ENCODE measurements at regions of chr22 and their contacts with region 1.

Region 1: GRCh38 chr22:39462443-39463221 is 5.8 kb downstream of the MGAT3 start:
- DNase-seq: peak; percentile 71 to 73
- H3K4me3 ChIP-seq: no peak overlapping the region
- H3K4me3 Mint-ChIP-seq: no peak overlapping the region
- H3K27ac Mint-ChIP-seq: no peak overlapping the region
- H3K4me1 ChIP-seq: peaks cover 21% of the 10 kb centered on the region
- H3K4me1 Mint-ChIP-seq: peaks cover 8% of the 10 kb centered on the region
- H3K27me3 ChIP-seq: no peaks in the 10 kb centered on the region
- H3K27me3 Mint-ChIP-seq: no peaks in the 10 kb centered on the region
- CTCF ChIP-seq: peak; percentile 29 to 65

Region 2: DNA sequence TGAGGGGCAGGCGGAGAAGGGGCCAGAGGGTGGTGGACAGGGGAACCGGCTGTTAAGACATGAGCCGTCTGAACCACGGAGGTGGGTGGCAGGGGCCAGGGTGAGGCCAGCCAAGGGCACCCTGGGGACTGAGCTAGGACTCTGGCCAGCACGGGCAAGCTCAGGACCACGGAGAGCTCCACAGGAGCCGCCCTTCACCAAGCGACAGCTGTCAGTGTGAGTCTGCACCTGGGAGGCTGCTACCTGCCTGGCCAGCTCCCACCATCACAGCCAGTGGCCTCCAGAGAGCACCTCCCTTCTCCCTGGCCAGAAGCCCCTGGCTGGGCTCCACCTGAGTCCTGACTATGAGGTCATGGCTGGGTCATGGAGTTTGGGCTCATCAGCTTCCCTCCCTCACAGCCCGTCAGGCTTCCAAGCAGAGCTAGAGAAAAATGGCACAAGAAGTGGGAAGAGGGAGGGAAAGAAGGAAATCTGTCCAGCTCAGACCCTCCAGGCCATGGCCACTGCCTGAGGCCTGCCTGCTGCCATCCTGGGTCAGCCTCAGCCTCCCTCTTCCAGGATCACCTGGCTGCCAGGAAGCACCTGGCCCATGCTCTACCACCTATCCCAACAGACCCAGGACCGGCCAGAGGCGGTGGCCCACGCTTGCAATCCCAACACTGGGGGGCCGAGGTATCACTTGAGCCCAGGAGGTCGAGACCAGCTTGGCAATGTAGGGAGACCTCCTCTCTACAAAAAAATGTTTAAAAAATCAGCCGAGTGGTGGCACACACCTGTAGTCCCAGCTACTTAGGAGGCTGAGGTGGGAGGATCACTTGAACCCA is 16.0 kb after region 1 on chr22:
- CTCF ChIA-PET with region 1: no interaction called
- POLR2A ChIA-PET with region 1: no interaction called
- intact Hi-C with region 1: no loop called
- DNase-seq: peak; percentile 66 to 79
- H3K4me3 ChIP-seq: no peak overlapping the region
- H3K4me3 Mint-ChIP-seq: no peak overlapping the region
- H3K27ac Mint-ChIP-seq: no peak overlapping the region
- H3K4me1 ChIP-seq: peaks cover 27% of the 10 kb centered on the region
- H3K4me1 Mint-ChIP-seq: peaks cover 32% of the 10 kb centered on the region
- H3K27me3 ChIP-seq: no peaks in the 10 kb centered on the region
- H3K27me3 Mint-ChIP-seq: no peaks in the 10 kb centered on the region
- CTCF ChIP-seq: no peak

Region 3: DNA sequence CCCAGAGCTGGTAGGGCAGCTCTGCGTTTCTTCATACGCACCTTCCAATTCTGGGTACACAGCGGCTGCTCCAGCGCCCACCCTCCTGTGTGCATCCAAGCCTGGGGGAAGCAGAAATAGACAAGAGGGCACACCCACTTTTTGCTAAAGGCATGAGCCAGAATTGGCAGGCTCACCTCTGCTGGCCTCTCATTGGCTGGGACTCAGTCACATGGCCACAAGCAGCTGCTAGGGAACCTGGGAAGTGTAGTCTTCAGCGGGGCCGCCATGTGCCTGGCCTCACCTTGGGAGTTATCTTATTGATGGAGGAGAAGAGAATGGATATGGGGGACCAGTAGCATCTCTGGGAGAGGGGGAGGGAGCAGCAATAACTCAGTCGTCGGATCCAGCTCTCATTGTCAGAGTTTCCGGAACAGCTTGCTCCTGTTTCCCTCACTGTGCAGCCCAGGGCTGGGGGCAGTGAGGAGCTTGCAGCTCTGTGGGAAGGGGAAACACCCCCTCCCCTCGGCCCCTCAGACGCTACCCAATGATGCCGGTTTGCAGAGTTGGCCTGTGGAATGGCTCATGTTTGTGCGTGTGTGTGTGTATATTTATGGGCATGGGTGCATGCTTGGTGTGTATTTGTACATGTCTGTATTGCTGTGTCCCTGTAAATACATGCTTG is 27.6 kb after region 1 on chr22:
- CTCF ChIA-PET with region 1: no interaction called
- POLR2A ChIA-PET with region 1: no interaction called
- intact Hi-C with region 1: loop called (anchors 1 kb)
- DNase-seq: peak; percentile 75 to 84
- H3K4me3 ChIP-seq: no peak overlapping the region
- H3K4me3 Mint-ChIP-seq: no peak overlapping the region
- H3K27ac Mint-ChIP-seq: no peak overlapping the region
- H3K4me1 ChIP-seq: peaks cover 16% of the 10 kb centered on the region
- H3K4me1 Mint-ChIP-seq: peaks cover 17% of the 10 kb centered on the region
- H3K27me3 ChIP-seq: no peaks in the 10 kb centered on the region
- H3K27me3 Mint-ChIP-seq: no peaks in the 10 kb centered on the region
- CTCF ChIP-seq: no peak

Region 4: DNA sequence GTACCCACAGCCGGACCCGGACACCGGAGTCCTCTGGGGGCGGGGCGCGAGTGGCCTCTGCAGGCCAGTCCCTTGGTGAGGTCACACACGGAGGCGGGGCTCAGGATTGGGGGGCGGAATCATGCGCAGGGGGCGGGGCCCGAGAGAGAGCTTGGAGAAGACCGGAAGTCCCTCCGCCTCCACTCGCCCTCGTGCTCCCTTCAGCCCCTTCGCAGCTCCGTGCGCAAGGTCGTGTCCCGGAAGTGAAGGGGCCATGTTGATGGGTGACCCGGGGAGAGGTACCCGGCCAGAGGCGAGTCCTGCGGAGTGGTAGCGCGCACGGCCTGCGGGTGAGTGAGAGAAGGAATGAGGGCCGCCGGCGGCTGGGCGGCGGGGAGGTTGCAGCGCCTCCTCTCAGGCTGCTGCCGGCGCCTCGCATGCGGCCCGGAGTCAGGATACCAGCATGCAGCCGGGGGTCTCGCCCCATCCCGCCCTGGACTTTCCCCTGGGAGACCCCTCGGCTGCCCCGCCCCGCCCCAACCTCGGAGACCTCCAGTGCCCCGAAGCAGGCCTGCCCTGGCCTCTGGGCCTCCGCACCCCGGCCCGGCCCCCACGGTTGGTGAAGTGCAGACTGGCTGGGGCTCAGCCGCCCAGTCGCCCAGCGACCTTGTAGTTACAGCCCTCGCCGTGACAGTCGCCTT is 39.6 kb after region 1 on chr22 and contains the start of gene MIEF1:
- CTCF ChIA-PET with region 1: interaction called, 5 read pairs
- POLR2A ChIA-PET with region 1: no interaction called
- intact Hi-C with region 1: loop called (anchors 5 kb)
- DNase-seq: peak; percentile 96 to 97
- H3K4me3 ChIP-seq: peak within 1 kb of the TSS; percentile 94
- H3K4me3 Mint-ChIP-seq: peak within 1 kb of the TSS; percentile 78
- H3K27ac Mint-ChIP-seq: peak within 1 kb of the TSS; percentile 62
- H3K4me1 ChIP-seq: peaks cover 6% of the 10 kb centered on the region
- H3K4me1 Mint-ChIP-seq: peaks cover 29% of the 10 kb centered on the region
- H3K27me3 ChIP-seq: no peaks in the 10 kb centered on the region
- H3K27me3 Mint-ChIP-seq: no peaks in the 10 kb centered on the region
- CTCF ChIP-seq: no peak
- total RNA-seq, gene MIEF1: 47.4 and 49.4 TPM in 2 replicates

Region 5: DNA sequence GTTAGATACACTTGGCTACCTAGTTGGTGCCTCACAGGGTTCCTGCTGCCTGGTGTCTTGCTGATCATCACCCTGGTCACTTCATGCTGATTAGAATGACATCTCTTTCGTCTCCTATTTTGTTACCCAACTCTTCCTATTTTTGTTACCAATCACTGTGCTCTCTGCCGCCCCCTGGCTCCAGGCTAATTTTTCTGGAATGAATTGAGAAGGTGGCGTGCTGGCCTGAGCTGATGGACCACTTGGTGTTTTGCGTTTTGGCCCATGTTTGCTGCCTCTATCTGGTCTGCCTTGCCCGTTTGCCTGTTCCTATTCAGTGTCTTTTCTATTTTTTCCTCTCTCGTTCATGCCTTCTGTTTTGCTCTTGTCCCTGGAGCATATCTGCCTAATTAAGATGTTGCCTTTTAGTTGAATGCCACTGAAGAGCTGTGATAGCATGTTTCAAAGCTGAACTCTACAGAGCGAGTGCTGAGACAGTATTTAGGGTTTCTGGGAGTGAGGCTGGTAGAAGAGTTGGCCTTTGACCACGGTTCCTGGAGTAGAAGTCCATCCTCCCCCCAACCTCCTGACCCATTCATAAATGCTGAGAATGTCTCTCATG is 51.8 kb after region 1 on chr22:
- CTCF ChIA-PET with region 1: no interaction called
- POLR2A ChIA-PET with region 1: interaction called, 3 read pairs
- intact Hi-C with region 1: loop called (anchors 1 kb)
- DNase-seq: peak in 1 of 2 experiments; percentile 80
- H3K4me3 ChIP-seq: no peak overlapping the region
- H3K4me3 Mint-ChIP-seq: no peak overlapping the region
- H3K27ac Mint-ChIP-seq: no peak overlapping the region
- H3K4me1 ChIP-seq: peaks cover 13% of the 10 kb centered on the region; the same call in 1 of the 2 replicates
- H3K4me1 Mint-ChIP-seq: peaks cover 28% of the 10 kb centered on the region
- H3K27me3 ChIP-seq: no peaks in the 10 kb centered on the region
- H3K27me3 Mint-ChIP-seq: no peaks in the 10 kb centered on the region
- CTCF ChIP-seq: peak; percentile 67 to 72

Measured in Caco-2 (cell line).